PC-3 (cell line): ENCODE measurements at regions of chr6 and their contacts with region 1.

Region 1: DNA sequence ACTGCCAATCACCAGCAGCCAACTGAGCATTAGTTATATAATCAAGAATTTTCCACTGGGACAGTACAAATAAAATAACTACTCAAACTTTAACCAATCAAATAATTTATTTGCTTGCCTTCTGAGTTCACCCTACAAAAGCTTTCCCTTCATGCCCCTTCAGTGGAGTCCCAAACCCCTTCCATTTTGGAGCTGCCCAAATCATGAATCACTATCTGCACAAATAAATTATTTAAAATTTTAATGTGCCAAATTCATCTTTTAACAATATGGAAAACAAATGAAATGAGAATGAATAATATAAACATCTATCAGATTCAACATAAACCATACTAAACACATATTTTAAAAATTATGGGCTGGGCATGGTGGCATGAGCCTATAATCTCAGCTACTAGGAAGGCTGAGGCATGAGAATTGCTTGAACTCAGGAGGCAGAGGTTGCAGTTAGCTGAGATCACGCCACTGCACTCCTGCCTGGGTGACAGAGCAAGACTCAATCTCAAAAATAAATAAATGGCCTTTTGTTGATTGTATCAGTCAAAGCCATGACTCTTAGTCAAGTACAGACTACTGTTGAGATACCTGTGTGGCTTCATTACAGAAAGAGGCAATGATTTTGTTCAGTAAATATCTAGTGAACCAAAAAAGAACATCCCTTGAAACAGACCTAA is 85.8 kb downstream of the KIF13A start:
- DNase-seq: no peak
- ATAC-seq: no peak
- H3K4me3 ChIP-seq: no peak overlapping the region
- H3K27ac ChIP-seq: no peak overlapping the region
- H3K4me1 ChIP-seq: peaks cover 23% of the 10 kb centered on the region
- H3K27me3 ChIP-seq: no peaks in the 10 kb centered on the region
- CTCF ChIP-seq: no peak

Region 2: DNA sequence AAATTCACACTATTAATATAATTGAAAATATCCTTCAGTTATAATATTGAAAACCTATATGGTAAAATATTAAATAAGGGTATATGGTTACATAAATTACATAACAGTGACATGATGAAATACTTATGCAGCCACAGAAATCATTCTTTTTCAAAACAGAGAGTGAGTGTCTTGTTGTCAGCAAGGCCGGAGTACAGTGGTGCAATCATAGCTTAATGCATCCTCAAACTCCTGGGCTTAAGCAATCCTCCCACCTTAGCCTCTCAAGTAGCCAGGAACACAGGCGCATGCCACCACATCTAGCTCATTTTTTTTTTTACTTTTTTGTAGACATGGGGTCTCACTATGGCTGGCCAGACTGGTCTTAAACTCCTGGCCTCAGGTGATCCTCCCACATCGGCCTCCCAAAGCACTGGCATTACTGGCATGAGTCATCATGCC is 261.1 kb before region 1 on chr6:
- CTCF ChIA-PET with region 1: interaction called, 10 read pairs
- POLR2A ChIA-PET with region 1: no interaction called
- intact Hi-C with region 1: no loop called
- DNase-seq: no peak
- ATAC-seq: no peak
- H3K4me3 ChIP-seq: no peak overlapping the region
- H3K27ac ChIP-seq: no peak overlapping the region
- H3K4me1 ChIP-seq: no peaks in the 10 kb centered on the region
- H3K27me3 ChIP-seq: no peaks in the 10 kb centered on the region
- CTCF ChIP-seq: no peak